ENCODE measurements at regions of chr4 and their contacts with region 1.

Region 1: GRCh38 chr4:7761720-7762119 is 177.9 kb downstream of the AFAP1 start:
- DNase-seq: no peak
- H3K4me3 ChIP-seq: no peak overlapping the region
- H3K27ac ChIP-seq: no peak overlapping the region
- H3K4me1 ChIP-seq: peaks cover 4% of the 10 kb centered on the region
- H3K27me3 ChIP-seq: no peaks in the 10 kb centered on the region
- CTCF ChIP-seq: peak; percentile 36 to 49

Region 2: DNA sequence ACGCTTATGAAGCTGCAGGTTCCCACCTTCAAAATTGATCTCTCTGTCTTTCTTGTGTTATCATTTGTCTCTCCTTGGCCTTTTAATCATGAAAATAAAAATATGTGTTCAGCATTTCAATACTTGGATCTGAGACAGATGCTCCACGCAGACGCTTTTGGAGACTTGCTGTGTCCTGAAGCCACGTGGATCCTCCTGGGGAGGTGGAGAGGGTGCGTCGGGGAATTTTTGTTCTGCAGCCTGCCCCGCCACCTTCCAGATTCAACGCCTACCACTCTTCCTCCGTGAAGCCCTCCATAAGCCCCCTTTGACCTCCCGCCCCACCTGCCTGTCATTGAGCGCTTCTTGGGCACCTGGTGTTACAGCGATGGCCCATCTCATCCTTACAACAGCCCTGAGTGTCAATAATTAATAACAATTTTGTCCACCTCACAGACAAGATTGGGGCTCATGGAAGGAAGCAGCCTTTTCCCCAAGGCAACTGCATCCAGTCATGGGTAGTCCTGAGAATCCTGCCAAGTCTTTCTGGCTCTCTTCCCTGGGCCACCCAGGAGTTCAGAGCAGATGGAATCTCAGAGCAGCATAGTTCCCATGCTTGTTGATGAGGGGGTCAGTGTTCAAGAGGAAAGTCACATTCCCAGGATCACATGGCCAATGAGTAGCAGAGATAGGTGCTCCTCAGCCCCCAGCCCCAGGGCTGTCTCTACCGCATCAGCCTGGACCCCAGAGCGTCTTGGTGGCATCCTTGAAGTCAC is 154.4 kb before region 1 on chr4:
- CTCF ChIA-PET with region 1: no interaction called
- dilution Hi-C with region 1: loop called (anchors 10 kb)
- in situ Hi-C with region 1: no loop called
- intact Hi-C with region 1: no loop called
- DNase-seq: no peak
- H3K4me3 ChIP-seq: no peak overlapping the region
- H3K27ac ChIP-seq: no peak overlapping the region
- H3K4me1 ChIP-seq: no peaks in the 10 kb centered on the region
- H3K27me3 ChIP-seq: no peaks in the 10 kb centered on the region
- CTCF ChIP-seq: no peak